ENCODE measurements at regions of chr9 and their contacts with region 1.

Region 1: GRCh38 chr9:136045971-136046920 is 48.8 kb downstream of the NACC2 start:
- DNase-seq: peak in 9 of 42 donors; percentile 6 to 56 (median 32)

Region 2: DNA sequence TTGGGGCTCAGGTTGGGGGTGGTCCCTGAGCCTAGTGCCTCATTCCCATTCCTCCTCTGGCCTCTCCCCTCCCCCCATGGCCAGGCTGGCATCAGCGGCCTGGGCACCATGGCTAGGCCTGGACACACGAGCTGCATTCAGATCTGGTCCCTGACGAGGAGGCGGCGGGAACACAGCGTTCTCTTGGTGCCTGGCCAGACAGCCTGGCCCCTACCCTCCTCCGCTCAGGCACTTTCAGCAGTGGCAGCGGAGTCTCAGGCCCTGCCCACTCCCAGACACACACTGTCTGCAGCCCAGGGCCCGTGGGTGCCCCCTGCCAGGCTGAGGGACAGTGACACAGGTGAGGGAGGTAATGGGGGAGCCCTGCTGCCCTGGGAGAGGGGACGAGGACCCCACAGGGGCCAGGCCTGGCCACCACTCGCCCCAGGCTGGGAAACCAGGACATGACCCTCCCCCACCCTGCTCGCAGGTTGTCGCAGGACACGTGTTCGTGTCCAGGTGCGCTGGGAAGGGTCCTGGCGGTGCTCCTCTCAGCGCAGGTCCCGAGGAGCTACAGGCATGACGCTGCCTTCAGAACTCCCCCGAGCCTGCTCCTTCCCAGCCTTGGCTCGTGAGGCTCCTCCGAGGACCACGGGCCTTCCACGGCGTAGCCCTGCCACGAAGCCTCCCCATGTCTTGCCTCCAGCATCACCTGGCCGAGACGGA is 65.2 kb before region 1 on chr9:
- intact Hi-C with region 1: loop called (anchors 5 kb)
- DNase-seq: peak; percentile 38 to 96 (median 86)

Measured in head of caudate nucleus (tissue), 42 donors.